ENCODE measurements at regions of chr6 and their contacts with region 1.

Region 1: GRCh38 chr6:122839477-122839876 is 50.4 kb downstream of the SMPDL3A start:
- DNase-seq: peak; percentile 68
- H3K4me3 ChIP-seq: no peak overlapping the region
- H3K27ac ChIP-seq: no peak overlapping the region
- H3K4me1 ChIP-seq: no peaks in the 10 kb centered on the region
- H3K27me3 ChIP-seq: no peaks in the 10 kb centered on the region
- CTCF ChIP-seq: peak in 2 of 3 experiments; percentile 70 to 73
- POLR2A ChIP-seq: no peak

Region 2: GRCh38 chr6:122730775-122731386 is 108.6 kb before region 1 on chr6:
- intact Hi-C with region 1: loop called (anchors 5 kb)
- DNase-seq: no peak
- H3K4me3 ChIP-seq: no peak overlapping the region
- H3K27ac ChIP-seq: no peak overlapping the region
- H3K4me1 ChIP-seq: no peaks in the 10 kb centered on the region
- H3K27me3 ChIP-seq: no peaks in the 10 kb centered on the region
- CTCF ChIP-seq: peak; percentile 30 to 75 (median 73)
- POLR2A ChIP-seq: no peak

Region 3: DNA sequence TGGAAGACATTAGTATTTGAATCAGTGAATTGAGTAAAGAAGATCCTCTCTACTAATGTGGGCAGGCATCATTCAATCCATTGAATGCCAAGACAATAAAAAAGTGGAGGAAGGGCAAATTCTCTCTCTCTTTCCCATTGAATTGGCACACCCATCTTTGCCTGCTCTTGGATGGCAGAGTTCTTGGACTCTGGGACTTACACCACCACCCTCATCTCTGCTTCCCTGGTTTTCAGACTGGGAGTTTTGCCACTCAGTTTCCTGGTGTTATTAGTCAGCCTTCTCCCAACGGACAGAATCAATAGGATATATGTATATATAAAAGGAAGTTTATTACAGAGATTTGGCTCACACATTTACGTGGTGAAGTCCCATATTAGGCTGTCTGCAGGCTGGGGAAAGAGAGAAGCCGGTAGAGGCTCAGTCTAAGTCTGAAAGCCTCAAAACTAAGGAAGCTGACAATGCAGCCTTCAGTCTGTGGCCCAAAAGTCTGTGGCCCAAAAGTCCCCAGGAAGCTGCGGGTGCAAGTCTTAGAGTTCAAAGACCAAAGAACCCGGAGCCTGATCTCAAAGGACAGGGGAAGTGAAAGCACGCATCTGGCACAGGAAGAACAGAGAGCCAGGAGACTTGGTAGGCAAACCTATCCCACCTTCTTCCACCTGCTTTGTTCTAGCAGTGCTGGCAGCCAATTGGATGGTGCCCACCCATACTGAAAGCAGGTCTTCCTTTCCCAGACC is 13.9 kb after region 1 on chr6:
- intact Hi-C with region 1: no loop called
- DNase-seq: no peak
- H3K4me3 ChIP-seq: no peak overlapping the region
- H3K27ac ChIP-seq: no peak overlapping the region
- H3K4me1 ChIP-seq: no peaks in the 10 kb centered on the region
- H3K27me3 ChIP-seq: no peaks in the 10 kb centered on the region
- CTCF ChIP-seq: no peak
- POLR2A ChIP-seq: no peak

Region 4: GRCh38 chr6:123489589-123489988 is 650.1 kb after region 1 on chr6:
- intact Hi-C with region 1: no loop called
- DNase-seq: no peak
- H3K4me3 ChIP-seq: no peak overlapping the region
- H3K27ac ChIP-seq: no peak overlapping the region
- H3K4me1 ChIP-seq: no peaks in the 10 kb centered on the region
- H3K27me3 ChIP-seq: no peaks in the 10 kb centered on the region
- CTCF ChIP-seq: no peak
- POLR2A ChIP-seq: no peak

Region 5: DNA sequence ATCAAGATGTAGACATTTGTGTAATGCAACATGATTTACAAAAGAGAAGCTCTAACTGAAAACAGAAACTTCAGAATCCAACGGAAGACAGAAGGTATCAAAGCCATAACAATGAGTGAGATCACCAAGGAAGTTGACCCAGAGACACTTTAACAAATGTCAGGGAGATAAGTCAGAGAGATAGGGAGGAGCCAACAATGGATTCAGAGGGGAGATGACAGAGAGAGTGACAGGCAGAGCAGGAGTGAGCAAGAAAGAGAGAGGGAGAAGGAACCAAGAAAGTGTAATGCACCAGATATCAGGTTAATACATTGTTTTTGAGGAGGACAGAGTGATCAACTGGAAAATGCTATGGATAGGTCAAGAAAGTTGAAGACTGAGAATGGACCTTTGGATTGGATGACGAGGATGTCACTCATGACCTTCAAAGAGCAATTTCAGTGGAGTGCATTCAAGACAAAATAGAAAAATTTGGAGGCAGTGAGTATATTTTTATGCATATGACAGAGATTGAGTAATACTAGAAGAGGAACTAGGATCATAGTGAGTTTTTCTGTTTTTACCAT is 710.7 kb after region 1 on chr6:
- intact Hi-C with region 1: no loop called
- DNase-seq: no peak
- H3K4me3 ChIP-seq: no peak overlapping the region
- H3K27ac ChIP-seq: no peak overlapping the region
- H3K4me1 ChIP-seq: no peaks in the 10 kb centered on the region
- H3K27me3 ChIP-seq: no peaks in the 10 kb centered on the region
- CTCF ChIP-seq: no peak
- POLR2A ChIP-seq: no peak

Measured in testis (tissue), 5 donors.